SK-N-SH (cell line): ENCODE measurements at regions of chr2 and their contacts with region 1.

Region 1: GRCh38 chr2:118032169-118033013 is 18.5 kb upstream of the CCDC93 start:
- DNase-seq: peak; percentile 53
- H3K4me3 ChIP-seq: no peak overlapping the region; a peak in 1 of 4 replicates
- H3K27ac ChIP-seq: no peak overlapping the region
- H3K4me1 ChIP-seq: no peaks in the 10 kb centered on the region
- H3K27me3 ChIP-seq: peaks cover 17% of the 10 kb centered on the region; the same call in 1 of the 2 replicates
- CTCF ChIP-seq: peak; percentile 82
- EP300 ChIP-seq: no peak
- RAD21 ChIP-seq: peak; percentile 56

Region 2: GRCh38 chr2:118013724-118014491 is 18.5 kb before region 1 on chr2 and contains the start of gene CCDC93:
- CTCF ChIA-PET with region 1: interaction called, 22 read pairs
- POLR2A ChIA-PET with region 1: no interaction called
- DNase-seq: peak; percentile 99
- H3K4me3 ChIP-seq: peak within 1 kb of the TSS; percentile 89 to 94
- H3K27ac ChIP-seq: peak within 1 kb of the TSS; percentile 61 to 75; a peak in 3 of 4 replicates
- H3K4me1 ChIP-seq: peaks cover 10 to 11% of the 10 kb centered on the region in 2 experiments; a peak in 3 of 4 replicates
- H3K27me3 ChIP-seq: no peaks in the 10 kb centered on the region
- CTCF ChIP-seq: no peak
- EP300 ChIP-seq: no peak
- RAD21 ChIP-seq: no peak
- polyA plus RNA-seq, gene CCDC93: 11.7 and 15.0 TPM in 2 replicates

Region 3: DNA sequence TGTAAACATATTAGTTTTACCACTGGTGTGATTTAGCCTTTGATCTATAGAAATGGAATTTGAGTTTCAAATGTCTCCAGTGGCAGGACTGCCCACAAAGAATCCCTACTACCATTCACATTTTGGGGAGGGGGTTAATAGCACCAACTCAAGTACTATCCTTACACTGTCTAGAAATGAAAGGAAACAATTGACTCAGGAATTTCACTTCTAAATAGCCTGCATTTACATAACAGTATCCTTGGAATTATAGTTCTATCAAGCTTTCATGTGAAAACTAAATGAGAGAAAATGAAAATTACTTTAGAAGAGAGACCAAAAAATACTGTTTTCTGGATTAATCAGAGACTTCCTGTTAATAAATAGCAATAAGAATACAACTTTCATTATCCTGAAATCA is 11.0 kb before region 1 on chr2:
- CTCF ChIA-PET with region 1: interaction called, 22 read pairs
- POLR2A ChIA-PET with region 1: no interaction called
- DNase-seq: no peak
- H3K4me3 ChIP-seq: no peak overlapping the region
- H3K27ac ChIP-seq: no peak overlapping the region
- H3K4me1 ChIP-seq: no peaks in the 10 kb centered on the region
- H3K27me3 ChIP-seq: peaks cover 14% of the 10 kb centered on the region; the same call in 1 of the 2 replicates
- CTCF ChIP-seq: no peak
- EP300 ChIP-seq: no peak
- RAD21 ChIP-seq: no peak

Region 4: DNA sequence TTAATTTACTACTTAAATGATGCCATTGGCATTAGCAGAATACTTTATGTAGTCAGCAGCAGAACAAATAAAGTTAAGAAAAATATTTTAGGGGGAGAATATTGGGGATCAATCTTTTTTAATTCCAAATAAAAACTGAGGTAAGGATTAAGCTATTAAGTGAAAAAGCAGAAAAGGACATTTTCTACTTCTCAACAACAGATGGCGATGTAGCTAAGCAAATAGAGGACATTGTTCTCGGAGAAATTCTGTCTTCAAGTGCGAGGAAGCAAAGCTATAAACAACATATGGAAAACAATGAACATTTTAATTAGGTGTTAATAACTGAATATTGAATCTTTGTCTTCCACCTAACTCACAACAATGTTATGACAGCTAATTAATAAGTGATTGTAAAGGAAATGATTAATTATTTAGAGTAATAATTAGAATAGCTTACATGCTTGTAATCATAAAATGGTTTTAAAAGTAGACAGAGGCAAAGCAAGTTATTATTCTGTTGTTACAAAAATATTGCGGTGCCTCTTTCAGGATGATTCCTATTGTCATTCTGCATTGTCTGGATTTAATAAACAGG is 14.3 kb after region 1 on chr2:
- CTCF ChIA-PET with region 1: interaction called, 23 read pairs
- POLR2A ChIA-PET with region 1: no interaction called
- DNase-seq: peak; percentile 23
- H3K4me3 ChIP-seq: peak overlapping the region in 1 of 2 experiments; percentile 2; a peak in 1 of 4 replicates
- H3K27ac ChIP-seq: no peak overlapping the region
- H3K4me1 ChIP-seq: peaks cover 0 to 8% of the 10 kb centered on the region in 2 experiments; a peak in 1 of 4 replicates
- H3K27me3 ChIP-seq: no peaks in the 10 kb centered on the region; the same call in 1 of the 2 replicates
- CTCF ChIP-seq: peak; percentile 72
- EP300 ChIP-seq: no peak
- RAD21 ChIP-seq: peak; percentile 88

Region 5: GRCh38 chr2:118056165-118056534 is 23.8 kb after region 1 on chr2:
- CTCF ChIA-PET with region 1: interaction called, 12 read pairs
- POLR2A ChIA-PET with region 1: no interaction called
- DNase-seq: no peak
- H3K4me3 ChIP-seq: no peak overlapping the region
- H3K27ac ChIP-seq: no peak overlapping the region
- H3K4me1 ChIP-seq: no peaks in the 10 kb centered on the region; a peak in 1 of 4 replicates
- H3K27me3 ChIP-seq: peaks cover 4% of the 10 kb centered on the region; the same call in 1 of the 2 replicates
- CTCF ChIP-seq: no peak
- EP300 ChIP-seq: no peak
- RAD21 ChIP-seq: no peak

Region 6: GRCh38 chr2:119011162-119011909 is 978.9 kb after region 1 on chr2:
- CTCF ChIA-PET with region 1: no interaction called
- POLR2A ChIA-PET with region 1: no interaction called
- DNase-seq: peak; percentile 92
- H3K4me3 ChIP-seq: peak overlapping the region in 1 of 2 experiments; percentile 26; a peak in 2 of 4 replicates
- H3K27ac ChIP-seq: no peak overlapping the region
- H3K4me1 ChIP-seq: peaks cover 0 to 2% of the 10 kb centered on the region in 2 experiments; a peak in 1 of 4 replicates
- H3K27me3 ChIP-seq: peaks cover 22% of the 10 kb centered on the region
- CTCF ChIP-seq: peak; percentile 56
- EP300 ChIP-seq: no peak
- RAD21 ChIP-seq: peak; percentile 81